Gastrocnemius medialis (tissue), 4 donors: ENCODE measurements at regions of chr10 and their contacts with region 1.

Region 1: GRCh38 chr10:7547829-7548228 is 118.9 kb downstream of the ITIH5 start:
- DNase-seq: no peak
- ATAC-seq: peak; percentile 36 to 39
- H3K4me3 ChIP-seq: no peak overlapping the region
- H3K27ac ChIP-seq: peak overlapping the region in 1 of 4 donors; percentile 43
- H3K4me1 ChIP-seq: peaks cover 0 to 3% of the 10 kb centered on the region in 2 donors
- H3K27me3 ChIP-seq: peaks cover 0 to 9% (median 2%) of the 10 kb centered on the region in 3 donors
- CTCF ChIP-seq: no peak
- POLR2A ChIP-seq: no peak

Region 2: GRCh38 chr10:7561216-7561893 is 13.5 kb after region 1 on chr10:
- in situ Hi-C with region 1: no loop called
- intact Hi-C with region 1: no loop called
- DNase-seq: peak; percentile 38 to 73
- ATAC-seq: peak; percentile 69 to 81
- H3K4me3 ChIP-seq: peak overlapping the region in 1 of 4 donors; percentile 26
- H3K27ac ChIP-seq: peak overlapping the region in 3 of 4 donors; percentile 46 to 51 (median 49)
- H3K4me1 ChIP-seq: peaks cover 9 to 27% of the 10 kb centered on the region in 2 donors
- H3K27me3 ChIP-seq: no peaks in the 10 kb centered on the region
- CTCF ChIP-seq: no peak
- POLR2A ChIP-seq: no peak

Region 3: DNA sequence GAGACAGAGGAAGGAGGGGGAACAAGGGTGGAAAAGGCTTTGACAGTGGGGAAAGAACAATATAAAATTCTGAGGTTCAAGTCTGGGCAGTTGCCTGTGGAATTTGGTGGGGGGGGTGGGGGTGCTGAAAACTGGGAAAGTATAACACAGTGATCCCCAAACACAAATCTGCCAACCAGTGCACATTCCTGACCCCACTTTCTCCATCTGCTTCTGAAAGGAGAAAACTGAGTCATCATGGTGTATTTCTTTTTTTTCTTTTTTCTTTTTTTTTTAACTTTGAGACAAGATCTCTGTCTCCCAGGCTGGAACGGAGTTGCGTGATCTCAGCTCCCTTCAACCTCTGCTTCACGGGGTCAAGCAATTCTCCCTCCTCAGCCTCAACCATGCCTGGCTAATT is 123.3 kb after region 1 on chr10:
- in situ Hi-C with region 1: no loop called
- intact Hi-C with region 1: loop called (anchors 5 kb)
- DNase-seq: no peak
- ATAC-seq: no peak
- H3K4me3 ChIP-seq: no peak overlapping the region
- H3K27ac ChIP-seq: no peak overlapping the region
- H3K4me1 ChIP-seq: peaks cover 1 to 5% of the 10 kb centered on the region in 2 donors
- H3K27me3 ChIP-seq: peaks cover 6 to 26% (median 22%) of the 10 kb centered on the region in 3 donors
- CTCF ChIP-seq: no peak
- POLR2A ChIP-seq: no peak